Right ventricle myocardium inferior (tissue), 1 donor: ENCODE measurements at regions of chr19 and their contacts with region 1.

Region 1: DNA sequence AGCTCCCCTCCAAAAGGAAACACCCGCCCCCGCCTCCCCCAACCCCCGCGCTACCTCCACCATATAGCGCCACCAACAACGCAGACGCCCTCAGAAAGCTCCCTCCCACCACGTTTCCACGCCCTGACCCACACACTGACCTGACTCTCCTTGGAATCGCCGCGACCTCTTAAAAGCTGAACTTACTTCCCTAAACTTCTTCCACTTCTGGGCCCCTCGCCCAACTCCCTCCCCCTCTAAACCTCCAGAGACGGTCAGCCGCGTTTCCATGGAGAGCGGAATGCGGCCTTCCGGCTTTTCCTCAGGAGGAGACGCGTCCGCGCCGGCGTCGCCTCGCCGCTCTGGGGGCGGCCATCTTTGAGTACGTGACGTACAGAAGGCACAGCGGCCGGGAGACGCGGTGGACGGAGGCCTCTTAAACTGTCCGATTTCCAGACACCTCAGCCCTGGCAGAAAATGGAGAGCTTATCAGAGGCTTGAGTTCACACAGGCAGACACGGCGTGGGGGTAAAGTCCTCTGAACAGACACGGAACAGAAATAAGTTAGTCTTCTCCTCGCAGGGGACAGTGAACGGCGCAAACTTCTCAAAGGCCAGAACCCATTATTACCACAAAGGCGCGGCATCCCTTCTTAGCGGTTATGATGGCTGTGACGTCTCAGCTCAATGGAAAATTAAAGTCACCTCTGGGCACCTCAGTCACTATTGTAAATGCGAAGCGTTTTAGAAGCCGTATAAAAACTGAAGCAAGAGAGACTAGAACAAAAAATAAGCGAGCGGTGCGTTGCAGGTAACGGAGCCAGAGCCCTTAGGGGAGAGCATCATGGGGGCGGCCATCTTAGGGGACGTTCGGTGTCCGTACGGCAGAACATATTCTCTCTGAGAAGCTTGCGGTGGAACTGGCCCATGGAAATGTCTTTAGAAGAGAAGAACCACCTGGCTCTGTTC is at the start of gene ZNF432:
- DNase-seq: peak; percentile 97
- ATAC-seq: peak; percentile 98
- total RNA-seq, gene ZNF432: 7.9 TPM

Region 2: GRCh38 chr19:52007806-52008557 is 40.8 kb before region 1 on chr19 and contains the start of gene ZNF615:
- intact Hi-C with region 1: loop called (anchors 1 kb)
- DNase-seq: peak; percentile 96
- ATAC-seq: peak; percentile 99
- total RNA-seq, gene ZNF615: 11.9 TPM

Region 3: GRCh38 chr19:52095172-52096014 is 46.6 kb after region 1 on chr19 and contains the start of gene ZNF841:
- intact Hi-C with region 1: loop called (anchors 2 kb)
- DNase-seq: peak; percentile 95
- ATAC-seq: peak; percentile 100
- total RNA-seq, gene ZNF841: 7.2 TPM